Tibial artery (tissue), 4 donors: ENCODE measurements at regions of chr1 and their contacts with region 1.

Region 1: DNA sequence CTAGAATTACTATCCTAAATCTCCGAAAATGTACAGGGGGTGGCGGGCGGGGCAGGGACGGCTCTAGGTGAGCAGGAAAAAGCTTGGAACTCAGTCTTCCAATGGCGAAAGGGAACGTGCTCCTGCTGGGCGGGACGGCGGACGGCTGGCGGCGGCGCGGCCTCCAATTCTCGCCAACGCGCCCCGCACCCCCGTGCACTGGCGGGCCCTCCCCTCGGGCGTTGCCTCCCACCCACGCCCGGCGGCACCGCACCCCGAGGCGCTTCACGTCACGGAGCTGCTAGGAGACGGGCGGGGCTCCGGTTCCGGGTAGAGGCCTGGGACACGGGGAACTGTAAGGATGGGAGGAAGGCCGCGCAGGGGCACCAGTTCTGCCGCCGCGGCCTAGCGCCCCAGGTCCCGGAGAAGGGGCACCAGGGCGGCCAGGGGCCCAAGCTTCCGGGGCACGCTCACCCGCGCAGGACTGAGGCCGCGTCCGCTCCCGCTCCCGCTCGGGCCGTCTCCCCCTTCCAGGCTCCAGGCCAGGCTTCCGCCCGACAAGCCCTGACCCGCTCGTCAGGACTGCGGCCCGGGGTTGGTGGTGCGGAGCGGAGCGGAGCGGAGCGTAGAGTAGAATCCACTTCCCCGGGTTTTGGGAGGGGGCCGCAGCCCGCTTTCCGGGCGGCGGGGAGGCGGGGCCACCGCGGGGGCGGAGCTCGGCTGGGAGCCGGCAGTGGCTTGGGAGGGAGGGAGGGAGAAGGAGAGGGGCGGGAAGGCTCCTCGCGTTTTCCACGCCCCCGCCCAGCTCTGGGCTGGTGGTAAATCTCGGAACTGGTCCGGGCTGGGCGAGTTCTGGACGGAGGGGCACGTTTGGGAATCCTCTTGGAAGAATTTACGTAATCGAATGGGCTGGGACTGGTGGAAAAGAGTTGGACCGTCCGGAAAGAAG is at the start of gene DDX59:
- DNase-seq: peak; percentile 96 to 98
- H3K4me3 ChIP-seq: peak within 1 kb of the TSS; percentile 70 to 94
- H3K27ac ChIP-seq: peak within 1 kb of the TSS; percentile 94 to 100
- H3K4me1 ChIP-seq: peaks cover 0 to 45% (median 26%) of the 10 kb centered on the region in 4 donors
- H3K27me3 ChIP-seq: no peaks in the 10 kb centered on the region
- CTCF ChIP-seq: peak in 1 of 2 experiments; percentile 11

Region 2: GRCh38 chr1:200226268-200226968 is 443.2 kb before region 1 on chr1:
- intact Hi-C with region 1: no loop called
- DNase-seq: no peak
- H3K4me3 ChIP-seq: no peak overlapping the region
- H3K27ac ChIP-seq: no peak overlapping the region
- H3K4me1 ChIP-seq: no peaks in the 10 kb centered on the region
- H3K27me3 ChIP-seq: peaks cover 0 to 3% of the 10 kb centered on the region in 2 donors
- CTCF ChIP-seq: no peak

Region 3: DNA sequence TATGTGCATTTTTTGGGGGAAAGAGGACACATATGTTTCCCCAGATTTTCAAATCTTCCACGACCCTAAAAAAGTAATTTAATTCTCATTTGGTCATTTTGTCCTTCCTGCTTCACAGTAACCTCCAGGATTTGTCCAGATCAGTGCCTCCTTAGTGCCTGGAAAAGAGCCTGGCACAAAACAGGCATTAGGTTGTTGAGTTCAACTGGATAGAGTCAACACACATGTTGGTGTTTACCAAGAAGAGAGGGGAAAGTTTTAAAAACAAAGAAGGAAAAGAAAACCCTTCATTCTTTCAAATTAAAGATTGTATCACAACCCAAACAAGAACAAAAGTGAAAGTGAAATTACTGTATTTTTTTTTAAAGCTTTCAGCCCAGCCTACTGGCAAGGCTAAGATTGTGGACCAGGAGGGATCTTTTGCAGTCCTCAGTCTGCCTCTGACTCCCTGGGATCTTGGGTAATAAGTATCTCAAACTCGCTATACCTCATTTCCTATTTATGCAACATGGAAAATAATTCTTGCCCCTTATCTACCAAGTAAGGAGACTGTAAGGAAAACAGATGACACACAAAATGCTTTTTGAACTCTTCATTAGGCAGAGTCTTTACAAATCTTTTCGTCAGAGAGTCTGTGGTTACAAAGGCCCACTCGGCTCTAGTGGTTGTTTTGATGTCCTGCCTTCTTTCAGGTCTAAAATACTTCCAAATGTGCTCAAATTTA is 317.6 kb before region 1 on chr1:
- intact Hi-C with region 1: no loop called
- DNase-seq: no peak
- H3K4me3 ChIP-seq: peak overlapping the region in 1 of 2 donors; percentile 9
- H3K27ac ChIP-seq: peak overlapping the region in 1 of 2 donors; percentile 28
- H3K4me1 ChIP-seq: peaks cover 0 to 12% (median 4%) of the 10 kb centered on the region in 4 donors
- H3K27me3 ChIP-seq: no peaks in the 10 kb centered on the region
- CTCF ChIP-seq: no peak

Region 4: GRCh38 chr1:200620273-200621131 is 49.1 kb before region 1 on chr1 and contains the start of gene KIF14:
- intact Hi-C with region 1: loop called (anchors 2 kb)
- DNase-seq: peak; percentile 93 to 94
- H3K4me3 ChIP-seq: peak within 1 kb of the TSS; percentile 50 to 64
- H3K27ac ChIP-seq: peak within 1 kb of the TSS; percentile 33 to 41
- H3K4me1 ChIP-seq: peaks cover 0 to 17% (median 2%) of the 10 kb centered on the region in 4 donors
- H3K27me3 ChIP-seq: no peaks in the 10 kb centered on the region
- CTCF ChIP-seq: no peak

Region 5: GRCh38 chr1:200738740-200739498 is 69.3 kb after region 1 on chr1 and contains the start of gene CAMSAP2:
- intact Hi-C with region 1: loop called (anchors 2 kb)
- DNase-seq: peak; percentile 90 to 94
- H3K4me3 ChIP-seq: peak within 1 kb of the TSS; percentile 78 to 96
- H3K27ac ChIP-seq: peak within 1 kb of the TSS; percentile 97 to 100
- H3K4me1 ChIP-seq: peaks cover 0 to 36% (median 9%) of the 10 kb centered on the region in 4 donors
- H3K27me3 ChIP-seq: no peaks in the 10 kb centered on the region
- CTCF ChIP-seq: peak in 1 of 2 experiments; percentile 9

Region 6: GRCh38 chr1:200802865-200803512 is 133.4 kb after region 1 on chr1:
- intact Hi-C with region 1: loop called (anchors 5 kb)
- DNase-seq: peak; percentile 84 to 85
- H3K4me3 ChIP-seq: no peak overlapping the region
- H3K27ac ChIP-seq: no peak overlapping the region
- H3K4me1 ChIP-seq: peaks cover 0 to 9% (median 0%) of the 10 kb centered on the region in 4 donors
- H3K27me3 ChIP-seq: no peaks in the 10 kb centered on the region
- CTCF ChIP-seq: peak; percentile 83 to 90

Region 7: GRCh38 chr1:200866521-200866920 is 196.9 kb after region 1 on chr1:
- intact Hi-C with region 1: no loop called
- DNase-seq: no peak
- H3K4me3 ChIP-seq: no peak overlapping the region
- H3K27ac ChIP-seq: no peak overlapping the region
- H3K4me1 ChIP-seq: peaks cover 0 to 7% (median 2%) of the 10 kb centered on the region in 4 donors
- H3K27me3 ChIP-seq: peaks cover 0 to 27% of the 10 kb centered on the region in 2 donors
- CTCF ChIP-seq: no peak